Caco-2 (cell line): ENCODE measurements at regions of chr11 and their contacts with region 1.

Region 1: GRCh38 chr11:3807909-3808860 is at the start of gene PGAP2:
- DNase-seq: peak; percentile 87 to 88
- H3K4me3 ChIP-seq: peak within 1 kb of the TSS; percentile 89
- H3K4me3 Mint-ChIP-seq: peak within 1 kb of the TSS; percentile 89
- H3K27ac Mint-ChIP-seq: peak within 1 kb of the TSS; percentile 93
- H3K4me1 ChIP-seq: peaks cover 12% of the 10 kb centered on the region
- H3K4me1 Mint-ChIP-seq: peaks cover 13% of the 10 kb centered on the region
- H3K27me3 ChIP-seq: no peaks in the 10 kb centered on the region
- H3K27me3 Mint-ChIP-seq: no peaks in the 10 kb centered on the region
- CTCF ChIP-seq: peak; percentile 69 to 86
- total RNA-seq, gene PGAP2: 53.6 and 57.9 TPM in 2 replicates

Region 2: DNA sequence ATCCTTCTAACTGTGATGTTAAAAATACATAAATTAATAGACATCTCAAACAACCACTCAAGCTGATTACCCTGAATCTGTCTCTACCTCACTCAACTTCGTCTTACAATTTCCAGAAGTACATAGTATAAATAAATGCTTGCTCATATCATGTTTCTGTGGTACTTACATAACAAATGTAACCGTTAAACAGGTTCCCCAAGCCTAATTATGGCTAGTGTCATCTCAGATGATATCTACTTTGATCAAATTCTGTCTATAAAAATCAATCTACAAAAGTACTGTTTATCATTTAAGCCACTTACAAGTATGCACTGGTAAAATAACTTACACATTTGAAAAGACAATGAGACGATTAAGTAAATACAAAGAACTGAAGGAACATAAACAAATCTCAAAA is 108.8 kb before region 1 on chr11:
- CTCF ChIA-PET with region 1: no interaction called
- POLR2A ChIA-PET with region 1: no interaction called
- intact Hi-C with region 1: loop called (anchors 5 kb)
- DNase-seq: no peak
- H3K4me3 ChIP-seq: no peak overlapping the region
- H3K4me3 Mint-ChIP-seq: no peak overlapping the region
- H3K27ac Mint-ChIP-seq: no peak overlapping the region
- H3K4me1 ChIP-seq: no peaks in the 10 kb centered on the region
- H3K4me1 Mint-ChIP-seq: no peaks in the 10 kb centered on the region
- H3K27me3 ChIP-seq: no peaks in the 10 kb centered on the region
- H3K27me3 Mint-ChIP-seq: no peaks in the 10 kb centered on the region
- CTCF ChIP-seq: no peak

Region 3: DNA sequence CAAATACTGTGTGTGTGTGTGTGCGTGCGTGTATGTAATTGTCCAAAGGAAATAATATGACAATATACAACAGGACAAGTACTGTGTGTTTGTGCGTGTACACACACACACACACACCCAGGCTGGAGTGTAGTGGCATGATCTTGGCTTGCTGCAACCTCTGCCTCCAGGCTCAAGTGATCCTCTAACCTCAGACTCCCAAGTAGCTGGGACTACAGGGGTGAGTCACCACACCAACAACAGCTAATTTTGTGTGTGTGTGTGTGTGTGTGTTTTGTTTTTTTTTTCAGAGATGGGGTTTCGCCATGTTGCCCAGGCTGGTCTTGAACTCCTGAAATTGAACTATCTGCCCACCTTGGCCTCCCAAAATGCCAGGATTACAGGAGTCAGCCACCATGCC is 72.4 kb before region 1 on chr11:
- CTCF ChIA-PET with region 1: interaction called, 4 read pairs
- POLR2A ChIA-PET with region 1: no interaction called
- intact Hi-C with region 1: loop called (anchors 5 kb)
- DNase-seq: no peak
- H3K4me3 ChIP-seq: no peak overlapping the region
- H3K4me3 Mint-ChIP-seq: no peak overlapping the region
- H3K27ac Mint-ChIP-seq: no peak overlapping the region
- H3K4me1 ChIP-seq: no peaks in the 10 kb centered on the region
- H3K4me1 Mint-ChIP-seq: peaks cover 8% of the 10 kb centered on the region
- H3K27me3 ChIP-seq: no peaks in the 10 kb centered on the region
- H3K27me3 Mint-ChIP-seq: no peaks in the 10 kb centered on the region
- CTCF ChIP-seq: no peak

Region 4: DNA sequence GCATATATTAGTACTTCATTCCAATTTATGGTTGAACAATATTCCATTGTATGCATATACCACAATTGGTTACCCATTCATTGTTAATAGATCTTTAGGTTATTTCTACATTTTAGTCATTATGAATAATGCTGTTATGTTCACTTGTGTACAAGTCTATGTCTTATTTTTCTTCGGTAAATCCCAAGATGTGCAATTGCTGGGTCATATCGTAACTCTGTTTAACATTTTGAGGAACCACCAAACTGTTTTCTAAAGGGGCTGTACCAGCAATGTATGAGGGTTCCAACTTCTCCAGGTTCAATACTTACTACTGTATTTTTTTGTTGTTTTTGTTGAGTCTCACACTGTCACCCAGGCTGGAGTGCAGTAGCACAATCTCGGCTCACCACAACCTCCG is 43.9 kb before region 1 on chr11:
- CTCF ChIA-PET with region 1: no interaction called
- POLR2A ChIA-PET with region 1: no interaction called
- intact Hi-C with region 1: no loop called
- DNase-seq: no peak
- H3K4me3 ChIP-seq: no peak overlapping the region
- H3K4me3 Mint-ChIP-seq: no peak overlapping the region
- H3K27ac Mint-ChIP-seq: no peak overlapping the region
- H3K4me1 ChIP-seq: no peaks in the 10 kb centered on the region
- H3K4me1 Mint-ChIP-seq: no peaks in the 10 kb centered on the region
- H3K27me3 ChIP-seq: no peaks in the 10 kb centered on the region
- H3K27me3 Mint-ChIP-seq: no peaks in the 10 kb centered on the region
- CTCF ChIP-seq: no peak

Region 5: GRCh38 chr11:3786781-3787428 is 21.3 kb before region 1 on chr11:
- CTCF ChIA-PET with region 1: interaction called, 3 read pairs
- POLR2A ChIA-PET with region 1: interaction called, 3 read pairs
- intact Hi-C with region 1: loop called (anchors 2 kb)
- DNase-seq: no peak
- H3K4me3 ChIP-seq: no peak overlapping the region
- H3K4me3 Mint-ChIP-seq: no peak overlapping the region
- H3K27ac Mint-ChIP-seq: no peak overlapping the region
- H3K4me1 ChIP-seq: 0 out of 2 replicates have a peak, but pooled peaks cover 7% of the 10 kb centered on the region
- H3K4me1 Mint-ChIP-seq: peaks cover 14% of the 10 kb centered on the region
- H3K27me3 ChIP-seq: no peaks in the 10 kb centered on the region
- H3K27me3 Mint-ChIP-seq: no peaks in the 10 kb centered on the region
- CTCF ChIP-seq: no peak

Region 6: DNA sequence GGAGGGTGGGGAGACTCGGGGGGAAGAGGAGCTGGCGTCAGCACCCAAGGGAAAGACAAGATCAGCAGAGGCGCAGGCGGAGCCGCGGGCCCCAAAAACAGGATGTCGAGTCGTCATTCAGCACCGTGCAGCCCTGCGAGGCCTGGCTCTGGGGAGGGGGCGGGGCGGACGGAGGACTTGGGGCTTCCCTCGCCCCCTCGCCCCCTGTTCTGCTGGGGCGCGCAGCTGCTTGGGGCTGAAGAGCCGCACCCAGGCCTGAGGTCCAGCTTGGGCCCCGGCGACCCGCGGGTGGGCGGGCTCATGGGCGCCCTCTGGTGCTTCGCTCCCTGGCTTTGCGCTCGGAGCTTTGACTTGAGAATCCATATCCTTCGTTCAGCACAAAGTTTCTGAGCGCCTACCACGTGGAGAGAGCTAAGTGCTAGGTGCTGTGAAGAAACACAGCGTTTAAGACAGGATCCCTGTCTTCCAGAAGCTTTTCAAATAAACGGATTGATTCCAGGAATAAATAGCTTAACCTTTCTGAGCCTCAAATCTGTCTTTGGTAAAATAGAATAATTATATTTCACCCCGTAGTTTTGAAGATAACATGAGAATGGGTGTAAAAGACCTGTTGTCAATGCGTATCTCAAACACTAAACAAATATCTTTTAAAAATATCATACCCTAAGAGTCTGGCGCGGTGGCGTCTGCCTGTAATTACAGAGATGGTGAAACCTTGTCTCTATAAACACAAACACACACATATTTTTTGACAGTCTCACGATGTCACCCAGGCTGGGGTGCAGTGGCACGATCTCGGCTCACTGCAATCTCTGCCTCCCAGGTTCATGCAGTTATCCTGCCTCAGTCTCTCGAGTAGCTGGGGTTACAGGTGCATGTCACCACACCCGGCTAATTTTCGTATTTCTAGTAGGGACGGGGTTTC is 33.5 kb after region 1 on chr11:
- CTCF ChIA-PET with region 1: interaction called, 39 read pairs
- POLR2A ChIA-PET with region 1: interaction called, 8 read pairs
- intact Hi-C with region 1: no loop called
- DNase-seq: peak; percentile 88 to 94
- H3K4me3 ChIP-seq: peak overlapping the region; percentile 68
- H3K4me3 Mint-ChIP-seq: peak overlapping the region; percentile 96
- H3K27ac Mint-ChIP-seq: peak overlapping the region; percentile 84
- H3K4me1 ChIP-seq: peaks cover 9% of the 10 kb centered on the region; the same call in 1 of the 2 replicates
- H3K4me1 Mint-ChIP-seq: peaks cover 10% of the 10 kb centered on the region
- H3K27me3 ChIP-seq: no peaks in the 10 kb centered on the region
- H3K27me3 Mint-ChIP-seq: no peaks in the 10 kb centered on the region
- CTCF ChIP-seq: peak; percentile 77 to 95